Activated naive CD4-positive, alpha-beta T cell treated with anti-CD3 and anti-CD28 coated beads for 36 hours (primary cell): ENCODE measurements at regions of chr5 and their contacts with region 1.

Region 1: GRCh38 chr5:131263648-131264450 is at the start of gene CDC42SE2:
- DNase-seq: peak; percentile 81
- H3K4me3 Mint-ChIP-seq: peak within 1 kb of the TSS; percentile 75
- H3K27ac Mint-ChIP-seq: peak within 1 kb of the TSS; percentile 93
- H3K4me1 Mint-ChIP-seq: peaks cover 48% of the 10 kb centered on the region
- H3K27me3 Mint-ChIP-seq: no peaks in the 10 kb centered on the region
- total RNA-seq, gene CDC42SE2: 106 to 108 TPM

Region 2: GRCh38 chr5:131165119-131165727 is 98.6 kb before region 1 on chr5 and contains the start of gene HINT1:
- CTCF ChIA-PET with region 1: interaction called, 6 read pairs
- intact Hi-C with region 1: loop called (anchors 1 kb)
- DNase-seq: peak; percentile 93
- H3K4me3 Mint-ChIP-seq: peak within 1 kb of the TSS; percentile 96
- H3K27ac Mint-ChIP-seq: peak within 1 kb of the TSS; percentile 99
- H3K4me1 Mint-ChIP-seq: peaks cover 44% of the 10 kb centered on the region
- H3K27me3 Mint-ChIP-seq: no peaks in the 10 kb centered on the region
- total RNA-seq, gene HINT1: 372 to 379 TPM

Region 3: GRCh38 chr5:131170540-131171275 is 93.1 kb before region 1 on chr5 and contains the start of gene LYRM7:
- CTCF ChIA-PET with region 1: interaction called, 5 read pairs
- intact Hi-C with region 1: loop called (anchors 1 kb)
- DNase-seq: peak; percentile 98
- H3K4me3 Mint-ChIP-seq: peak within 1 kb of the TSS; percentile 99
- H3K27ac Mint-ChIP-seq: peak within 1 kb of the TSS; percentile 92
- H3K4me1 Mint-ChIP-seq: peaks cover 44% of the 10 kb centered on the region
- H3K27me3 Mint-ChIP-seq: no peaks in the 10 kb centered on the region
- total RNA-seq, gene LYRM7: 14.6 to 15.0 TPM